Esophagus squamous epithelium (tissue), 5 donors: ENCODE measurements at regions of chr6 and their contacts with region 1.

Region 1: DNA sequence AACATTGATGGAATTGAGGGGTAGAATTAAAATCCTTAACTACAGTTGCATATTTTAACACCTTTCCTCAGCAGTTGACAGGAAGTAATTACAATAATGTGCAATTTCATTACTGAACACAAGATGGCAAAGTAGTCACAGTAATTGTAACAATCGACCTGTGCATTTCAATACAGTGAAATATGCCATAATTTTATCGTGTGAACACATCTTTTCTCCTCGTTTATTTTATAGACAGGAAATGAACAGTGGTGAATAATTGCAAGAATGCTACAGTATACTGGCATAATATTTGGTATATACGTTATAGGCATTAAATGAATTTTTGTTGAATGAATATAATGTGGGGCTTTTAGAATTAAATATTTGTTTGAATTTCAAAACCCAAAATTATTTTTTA is 25.0 kb downstream of the CYB5R4 start:
- DNase-seq: no peak
- H3K4me3 ChIP-seq: no peak overlapping the region
- H3K27ac ChIP-seq: no peak overlapping the region
- H3K4me1 ChIP-seq: peaks cover 0 to 3% (median 0%) of the 10 kb centered on the region in 3 donors
- H3K27me3 ChIP-seq: no peaks in the 10 kb centered on the region
- CTCF ChIP-seq: peak; percentile 51 to 81 (median 68)
- POLR2A ChIP-seq: no peak

Region 2: GRCh38 chr6:84218091-84218490 is 333.6 kb after region 1 on chr6:
- intact Hi-C with region 1: loop called (anchors 5 kb)
- DNase-seq: no peak
- H3K4me3 ChIP-seq: no peak overlapping the region
- H3K27ac ChIP-seq: no peak overlapping the region
- H3K4me1 ChIP-seq: no peaks in the 10 kb centered on the region
- H3K27me3 ChIP-seq: no peaks in the 10 kb centered on the region
- CTCF ChIP-seq: no peak
- POLR2A ChIP-seq: no peak